AG04449 (cell line): ENCODE measurements at regions of chr6 and their contacts with region 1.

Region 1: GRCh38 chr6:10434692-10435376 is 20.0 kb upstream of the TFAP2A start:
- DNase-seq: no peak
- H3K4me3 ChIP-seq: no peak overlapping the region
- CTCF ChIP-seq: peak; percentile 39

Region 2: GRCh38 chr6:10256113-10256690 is 178.6 kb before region 1 on chr6:
- CTCF ChIA-PET with region 1: interaction called, 11 read pairs
- POLR2A ChIA-PET with region 1: no interaction called
- DNase-seq: no peak
- H3K4me3 ChIP-seq: no peak overlapping the region
- CTCF ChIP-seq: no peak

Region 3: GRCh38 chr6:10343320-10343719 is 91.5 kb before region 1 on chr6:
- CTCF ChIA-PET with region 1: no interaction called
- POLR2A ChIA-PET with region 1: no interaction called
- DNase-seq: no peak
- H3K4me3 ChIP-seq: no peak overlapping the region
- CTCF ChIP-seq: no peak

Region 4: GRCh38 chr6:10558565-10558964 is 123.7 kb after region 1 on chr6:
- CTCF ChIA-PET with region 1: no interaction called
- POLR2A ChIA-PET with region 1: no interaction called
- DNase-seq: no peak
- H3K4me3 ChIP-seq: no peak overlapping the region
- CTCF ChIP-seq: no peak

Region 5: GRCh38 chr6:11161031-11161966 is 726.5 kb after region 1 on chr6:
- CTCF ChIA-PET with region 1: no interaction called
- POLR2A ChIA-PET with region 1: no interaction called
- DNase-seq: no peak
- H3K4me3 ChIP-seq: no peak overlapping the region
- CTCF ChIP-seq: no peak